Head of caudate nucleus (tissue), 42 donors: ENCODE measurements at regions of chr9 and their contacts with region 1.

Region 1: GRCh38 chr9:136292591-136293448 is 11.1 kb downstream of the CCDC187 start:
- DNase-seq: peak in 1 of 42 donors; percentile 13

Region 2: GRCh38 chr9:136143216-136144001 is 149.4 kb before region 1 on chr9:
- intact Hi-C with region 1: loop called (anchors 5 kb)
- DNase-seq: no peak